ENCODE measurements at regions of chr6 and their contacts with region 1.

Region 1: DNA sequence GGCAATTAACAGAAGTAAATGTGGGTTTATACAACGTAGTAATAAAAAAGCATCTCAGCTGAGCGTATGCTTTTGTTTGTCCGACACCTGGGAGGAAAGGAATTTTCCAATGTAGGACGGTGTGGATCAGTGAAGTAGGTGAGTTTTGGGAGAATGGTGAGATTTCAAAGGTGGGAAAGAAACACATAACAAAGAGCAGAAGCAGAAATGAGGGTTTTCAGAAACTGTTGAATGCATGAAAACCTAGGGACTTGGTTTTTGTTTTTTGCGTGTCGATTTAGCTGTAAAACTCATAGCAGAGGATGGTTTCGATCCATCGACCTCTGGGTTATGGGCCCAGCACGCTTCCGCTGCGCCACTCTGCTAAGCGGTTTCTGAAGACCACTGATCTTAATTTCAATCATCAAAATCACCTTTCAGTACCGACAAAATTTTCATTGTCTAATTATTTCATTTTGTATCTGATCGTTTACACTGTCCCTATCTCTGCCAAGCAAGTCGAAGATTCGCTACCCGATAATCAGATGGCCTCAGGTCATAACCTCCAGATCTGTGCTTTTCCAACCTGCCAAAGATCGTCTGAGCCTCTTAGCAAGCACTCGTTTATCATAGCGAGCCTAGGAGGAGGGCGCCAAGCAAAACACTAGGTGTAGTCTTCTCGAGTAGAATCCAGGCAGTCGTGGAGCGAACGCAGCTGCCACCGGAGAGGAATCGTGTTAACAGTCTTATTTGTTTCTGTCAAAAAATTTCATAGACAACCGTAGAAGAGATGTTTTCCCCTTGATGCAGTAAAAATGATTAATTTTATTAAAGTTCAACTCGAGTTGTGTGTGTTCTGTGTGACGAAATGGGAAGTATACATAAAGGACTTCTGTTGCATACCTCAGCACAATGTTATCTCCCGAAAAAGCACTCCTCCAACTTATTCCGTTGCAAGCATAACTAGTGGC is 20.9 kb upstream of the POM121L2 start:
- DNase-seq: peak; percentile 84
- H3K4me3 Mint-ChIP-seq: peak overlapping the region; percentile 78
- H3K27ac Mint-ChIP-seq: peak overlapping the region; percentile 27
- H3K4me1 Mint-ChIP-seq: peaks cover 18% of the 10 kb centered on the region
- H3K27me3 Mint-ChIP-seq: no peaks in the 10 kb centered on the region
- CTCF ChIP-seq: no peak

Region 2: DNA sequence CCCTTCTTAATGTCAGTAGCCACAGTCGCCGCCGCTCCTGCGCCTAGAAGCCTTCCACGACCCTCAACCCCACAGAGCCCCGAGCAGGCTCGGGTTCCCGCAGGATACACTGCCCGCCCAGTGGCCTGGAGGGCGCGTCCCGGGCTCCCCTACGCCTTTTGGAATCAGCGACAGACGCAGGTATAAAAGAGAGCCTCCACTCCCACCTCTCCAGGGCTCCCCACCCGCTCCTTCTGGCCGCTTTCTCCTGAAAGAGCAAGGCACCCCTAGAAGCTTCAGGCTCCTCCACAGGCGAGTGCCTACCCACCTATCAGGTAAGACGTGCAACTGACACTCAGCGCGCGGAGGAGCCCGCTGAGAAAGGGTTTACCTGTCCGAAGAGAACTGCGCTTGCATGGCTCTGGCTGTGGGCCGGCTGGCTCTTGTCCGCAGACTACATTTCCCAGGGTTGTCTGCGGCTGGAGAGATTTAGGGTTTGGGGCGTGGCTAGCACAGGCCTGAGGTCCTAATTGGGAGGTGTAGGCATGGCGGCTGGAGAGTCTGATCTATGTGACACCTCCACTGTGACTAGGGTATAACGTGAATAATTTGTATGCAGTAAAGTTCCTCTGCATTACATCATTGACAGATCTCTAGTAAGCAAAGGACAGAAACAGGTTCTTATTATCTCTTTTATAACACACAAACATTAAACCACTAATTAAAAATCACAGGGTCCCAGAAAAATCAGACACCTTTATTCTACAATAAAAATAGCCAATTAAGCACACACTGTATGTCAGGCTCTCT is 42.1 kb after region 1 on chr6:
- CTCF ChIA-PET with region 1: no interaction called
- POLR2A ChIA-PET with region 1: interaction called, 13 read pairs
- intact Hi-C with region 1: no loop called
- DNase-seq: peak; percentile 92
- H3K4me3 Mint-ChIP-seq: peak overlapping the region; percentile 80
- H3K27ac Mint-ChIP-seq: peak overlapping the region; percentile 36
- H3K4me1 Mint-ChIP-seq: peaks cover 11% of the 10 kb centered on the region
- H3K27me3 Mint-ChIP-seq: no peaks in the 10 kb centered on the region
- CTCF ChIP-seq: no peak

Measured in MCF 10A (cell line).